ENCODE measurements at regions of chr20 and their contacts with region 1.

Region 1: DNA sequence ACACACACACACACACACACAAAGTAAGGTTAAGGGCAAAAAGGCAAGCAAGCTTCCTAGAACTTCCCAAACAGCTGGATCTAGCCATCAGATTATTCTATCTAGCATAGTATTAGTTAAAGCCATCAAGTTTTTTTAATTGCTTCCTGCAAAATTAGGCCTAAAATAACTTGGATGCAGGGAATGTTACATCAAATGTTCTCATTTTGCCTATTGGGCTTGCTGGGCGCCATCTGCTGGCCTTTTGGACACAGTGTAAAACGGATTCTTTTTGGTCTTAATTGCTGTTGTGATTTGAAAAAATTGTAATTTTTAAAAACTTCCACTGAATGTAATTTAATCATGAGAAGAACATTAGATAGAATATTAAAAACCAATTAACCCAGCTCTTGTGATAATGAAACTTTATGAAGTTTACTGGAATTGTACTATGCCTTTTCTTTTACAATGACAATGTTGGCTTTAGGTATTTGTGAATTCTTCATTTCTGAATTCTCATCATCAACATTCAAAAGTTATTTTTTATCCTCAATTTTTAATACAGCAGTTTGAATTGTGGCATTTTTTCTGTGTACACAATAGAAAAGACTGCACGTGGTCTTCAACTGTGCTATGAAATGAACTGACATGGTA is 6.8 kb downstream of the MKKS start:
- DNase-seq: peak; percentile 32
- H3K4me3 Mint-ChIP-seq: no peak overlapping the region
- H3K27ac Mint-ChIP-seq: peak overlapping the region; percentile 57
- H3K4me1 Mint-ChIP-seq: peaks cover 64% of the 10 kb centered on the region
- H3K27me3 Mint-ChIP-seq: no peaks in the 10 kb centered on the region
- CTCF ChIP-seq: peak; percentile 36

Region 2: GRCh38 chr20:10306440-10307358 is 120.5 kb before region 1 on chr20:
- CTCF ChIA-PET with region 1: no interaction called
- intact Hi-C with region 1: loop called (anchors 10 kb)
- DNase-seq: no peak
- H3K4me3 Mint-ChIP-seq: no peak overlapping the region
- H3K27ac Mint-ChIP-seq: no peak overlapping the region
- H3K4me1 Mint-ChIP-seq: peaks cover 32% of the 10 kb centered on the region
- H3K27me3 Mint-ChIP-seq: no peaks in the 10 kb centered on the region
- CTCF ChIP-seq: no peak

Region 3: GRCh38 chr20:10412591-10413408 is 14.4 kb before region 1 on chr20:
- CTCF ChIA-PET with region 1: no interaction called
- intact Hi-C with region 1: no loop called
- DNase-seq: no peak
- H3K4me3 Mint-ChIP-seq: no peak overlapping the region
- H3K27ac Mint-ChIP-seq: no peak overlapping the region
- H3K4me1 Mint-ChIP-seq: peaks cover 21% of the 10 kb centered on the region
- H3K27me3 Mint-ChIP-seq: no peaks in the 10 kb centered on the region
- CTCF ChIP-seq: no peak

Measured in Calu3 (cell line).